Gastrocnemius medialis (tissue), 4 donors: ENCODE measurements at regions of chr20 and their contacts with region 1.

Region 1: DNA sequence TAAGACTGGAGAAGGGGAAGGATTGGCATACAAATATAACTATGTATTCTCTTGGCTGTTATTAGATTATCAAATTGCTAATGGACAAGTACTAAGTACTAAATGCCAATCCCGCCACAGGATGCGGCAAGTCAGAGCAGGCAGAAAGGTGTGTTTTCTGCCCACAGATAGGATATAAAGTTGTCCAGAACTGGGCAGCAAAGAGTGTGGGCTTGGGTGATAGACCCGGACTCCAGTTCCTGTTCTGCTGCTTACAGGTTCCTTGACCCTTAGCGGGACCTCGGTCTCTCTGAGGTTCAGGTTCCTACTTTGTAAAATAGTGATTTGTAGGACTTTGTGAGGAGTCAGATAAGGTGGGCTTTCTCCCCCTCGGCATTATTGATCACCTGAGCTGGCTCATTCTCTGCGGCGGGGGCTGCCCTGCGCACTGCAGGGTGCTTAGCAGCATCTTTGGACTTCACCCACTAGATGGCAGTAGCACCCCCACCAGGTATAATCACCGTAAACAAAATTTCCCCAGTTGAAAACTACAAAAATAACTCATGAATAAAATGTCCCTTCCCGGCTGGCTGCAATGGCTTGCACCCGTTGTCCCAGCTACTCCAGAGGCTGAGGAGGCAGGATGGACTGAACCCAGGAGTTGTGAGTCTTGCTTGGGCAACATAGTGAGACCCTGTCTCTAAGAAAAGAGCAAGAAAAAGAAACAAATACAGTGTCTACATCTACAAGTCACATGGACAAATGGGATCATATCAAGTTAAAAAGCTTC is 193.1 kb downstream of the DOK5 start:
- DNase-seq: no peak
- ATAC-seq: no peak
- H3K4me3 ChIP-seq: no peak overlapping the region
- H3K27ac ChIP-seq: no peak overlapping the region
- H3K4me1 ChIP-seq: no peaks in the 10 kb centered on the region
- H3K27me3 ChIP-seq: peaks cover 0 to 3% (median 1%) of the 10 kb centered on the region in 3 donors
- CTCF ChIP-seq: peak in 2 of 5 experiments; percentile 43 to 60
- POLR2A ChIP-seq: no peak

Region 2: DNA sequence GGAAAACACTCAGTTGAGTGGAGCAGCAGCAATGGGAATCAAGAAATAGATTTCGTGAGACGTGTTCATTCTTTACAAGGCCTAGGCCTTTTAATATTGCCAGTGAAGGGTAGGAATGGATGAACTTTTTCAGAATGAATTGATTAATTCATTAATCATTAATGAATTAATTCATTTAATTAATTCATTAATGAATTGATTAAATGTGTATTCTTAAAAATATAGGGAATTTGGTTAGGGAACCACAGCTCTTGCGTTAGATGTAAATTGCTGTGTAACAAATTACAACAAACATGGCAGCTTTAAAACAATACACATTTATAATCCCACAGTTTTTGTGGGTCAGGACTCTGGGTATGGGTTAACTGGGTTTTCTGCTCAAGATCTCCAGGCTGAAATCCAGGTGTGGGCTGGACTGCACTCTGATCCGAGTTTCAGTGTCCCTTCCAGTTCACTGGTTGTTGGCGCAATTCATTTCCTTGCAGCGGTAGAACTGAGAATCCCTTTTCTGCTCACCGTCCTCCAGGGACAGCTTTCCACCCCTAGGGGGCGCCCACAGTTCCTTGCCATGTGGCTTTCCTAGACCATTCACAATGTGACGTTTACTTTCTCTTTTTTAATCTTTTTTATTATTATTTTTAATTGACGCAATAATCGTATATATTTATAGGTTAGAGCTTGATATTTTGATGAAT is 565.2 kb before region 1 on chr20:
- in situ Hi-C with region 1: loop called in 1 of 4 experiments (anchors 25 kb)
- intact Hi-C with region 1: no loop called
- DNase-seq: peak in 1 of 2 donors; percentile 9
- ATAC-seq: no peak
- H3K4me3 ChIP-seq: no peak overlapping the region
- H3K27ac ChIP-seq: no peak overlapping the region
- H3K4me1 ChIP-seq: no peaks in the 10 kb centered on the region
- H3K27me3 ChIP-seq: no peaks in the 10 kb centered on the region
- CTCF ChIP-seq: peak in 4 of 5 experiments; percentile 22 to 67 (median 44)
- POLR2A ChIP-seq: no peak